ENCODE measurements at regions of chr1 and their contacts with region 1.

Region 1: GRCh38 chr1:35079003-35079930 is at the start of gene ZMYM1:
- DNase-seq: peak; percentile 95
- H3K4me3 Mint-ChIP-seq: peak within 1 kb of the TSS; percentile 96
- H3K27ac Mint-ChIP-seq: peak within 1 kb of the TSS; percentile 96
- H3K4me1 Mint-ChIP-seq: peaks cover 28% of the 10 kb centered on the region
- H3K27me3 Mint-ChIP-seq: peaks cover 5% of the 10 kb centered on the region
- total RNA-seq, gene ZMYM1: 2.8 and 5.7 TPM in 2 replicates

Region 2: DNA sequence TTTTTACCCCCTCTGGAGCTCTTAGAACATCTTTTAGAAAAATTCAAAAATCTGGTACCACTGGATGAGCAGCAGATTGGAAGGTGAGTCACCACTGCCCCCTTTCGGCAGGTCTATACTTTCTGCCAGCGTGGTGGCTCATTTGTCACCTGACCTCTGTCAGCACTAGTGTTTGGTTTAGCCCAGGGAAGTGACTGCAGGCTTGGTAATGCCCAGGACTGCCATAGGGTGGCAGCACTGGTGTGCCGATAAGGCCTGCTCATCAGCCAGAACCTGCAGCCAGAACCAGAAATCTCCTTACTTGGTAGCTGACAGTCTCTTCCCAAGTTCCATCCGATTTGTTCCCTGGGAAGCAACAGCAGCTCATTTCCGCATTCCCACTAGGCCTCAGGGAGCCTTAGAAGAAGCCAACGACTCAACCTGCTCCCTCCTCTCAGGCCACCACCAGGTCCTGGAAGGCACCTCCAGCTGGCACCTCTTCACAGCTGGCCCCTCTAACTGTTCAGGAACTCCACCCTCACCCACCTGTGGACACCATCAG is 226.5 kb before region 1 on chr1:
- intact Hi-C with region 1: loop called (anchors 10 kb)
- DNase-seq: peak; percentile 97
- H3K4me3 Mint-ChIP-seq: no peak overlapping the region
- H3K27ac Mint-ChIP-seq: peak overlapping the region; percentile 3
- H3K4me1 Mint-ChIP-seq: peaks cover 11% of the 10 kb centered on the region
- H3K27me3 Mint-ChIP-seq: no peaks in the 10 kb centered on the region

Region 3: DNA sequence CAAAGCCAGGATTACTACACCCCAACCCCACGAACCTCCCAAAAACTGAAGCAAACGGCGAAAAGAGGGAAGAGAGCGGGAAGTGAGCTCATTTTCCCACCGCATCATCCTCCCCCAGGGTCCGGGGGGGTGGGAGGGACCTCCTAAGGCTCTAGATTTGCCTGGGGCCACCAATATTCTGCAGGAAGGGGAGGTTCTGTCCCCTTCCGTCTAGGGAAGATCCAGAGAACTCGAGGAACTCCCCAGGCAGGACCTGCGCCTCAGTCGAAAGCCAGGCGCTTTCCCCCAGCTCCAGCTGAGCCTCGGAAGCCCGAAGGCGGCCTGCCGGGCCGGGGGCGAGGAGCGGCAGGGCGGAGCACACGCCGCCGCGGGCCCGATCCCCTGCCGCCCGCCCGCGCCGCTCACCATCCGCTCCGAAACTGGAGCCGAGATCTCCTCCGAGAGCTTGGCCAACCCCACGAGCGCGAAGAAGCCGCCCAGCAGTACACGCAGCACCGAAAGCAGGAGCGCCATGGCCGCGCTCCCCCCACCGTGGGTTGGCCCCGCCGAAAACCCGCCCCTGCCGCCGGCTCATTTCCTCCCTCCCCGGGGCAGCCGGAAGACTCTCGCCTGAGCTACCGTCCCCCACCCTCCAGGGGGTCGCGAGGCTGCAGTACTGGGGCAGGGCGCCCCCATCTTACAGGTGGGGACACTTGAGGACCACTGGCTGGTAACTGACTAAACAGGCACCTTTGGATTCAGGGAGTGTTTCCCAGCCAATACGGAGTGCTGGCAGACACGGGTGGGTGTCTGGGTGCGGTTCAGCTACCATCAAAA is 94.3 kb before region 1 on chr1 and contains the start of gene TMEM35B:
- intact Hi-C with region 1: loop called (anchors 5 kb)
- DNase-seq: peak; percentile 95
- H3K4me3 Mint-ChIP-seq: peak within 1 kb of the TSS; percentile 95
- H3K27ac Mint-ChIP-seq: peak within 1 kb of the TSS; percentile 92
- H3K4me1 Mint-ChIP-seq: peaks cover 32% of the 10 kb centered on the region
- H3K27me3 Mint-ChIP-seq: no peaks in the 10 kb centered on the region
- total RNA-seq, gene TMEM35B: 20.1 and 22.1 TPM in 2 replicates

Region 4: DNA sequence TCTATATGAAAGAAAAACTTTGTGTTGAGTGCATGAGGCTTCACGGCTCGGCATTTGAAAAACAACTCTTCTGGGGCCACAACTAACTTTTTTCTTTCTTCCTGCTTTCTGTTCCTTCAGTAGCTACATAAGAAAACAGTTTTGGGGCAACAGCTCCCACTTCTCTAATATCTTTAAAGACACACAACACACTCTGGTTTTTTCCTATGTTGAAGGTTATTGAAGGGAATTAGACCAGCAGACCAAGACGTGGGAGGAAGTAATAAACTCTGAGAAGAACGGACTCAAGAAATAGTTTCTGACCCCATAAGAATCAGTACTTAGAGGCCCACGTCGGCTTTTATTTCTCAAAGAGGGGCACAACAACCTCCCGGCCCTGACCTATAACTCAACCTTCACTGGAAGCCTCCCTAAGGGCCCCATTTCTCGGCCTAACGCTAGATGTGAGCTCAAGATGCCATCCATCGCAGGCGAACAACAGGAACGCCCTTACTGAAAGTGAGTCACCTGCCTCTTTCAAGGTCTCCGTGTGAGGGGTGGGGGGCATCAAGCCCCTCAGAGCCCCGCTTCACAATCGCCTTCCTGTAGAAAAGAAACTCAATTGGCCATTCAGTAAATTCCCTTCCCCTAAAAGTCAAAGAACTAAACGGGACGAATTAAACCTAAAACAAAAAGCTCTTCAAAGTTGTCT is 48.4 kb before region 1 on chr1:
- intact Hi-C with region 1: loop called (anchors 1 kb)
- DNase-seq: peak; percentile 82
- H3K4me3 Mint-ChIP-seq: peak overlapping the region; percentile 99
- H3K27ac Mint-ChIP-seq: peak overlapping the region; percentile 93
- H3K4me1 Mint-ChIP-seq: peaks cover 23% of the 10 kb centered on the region
- H3K27me3 Mint-ChIP-seq: peaks cover 2% of the 10 kb centered on the region

Region 5: DNA sequence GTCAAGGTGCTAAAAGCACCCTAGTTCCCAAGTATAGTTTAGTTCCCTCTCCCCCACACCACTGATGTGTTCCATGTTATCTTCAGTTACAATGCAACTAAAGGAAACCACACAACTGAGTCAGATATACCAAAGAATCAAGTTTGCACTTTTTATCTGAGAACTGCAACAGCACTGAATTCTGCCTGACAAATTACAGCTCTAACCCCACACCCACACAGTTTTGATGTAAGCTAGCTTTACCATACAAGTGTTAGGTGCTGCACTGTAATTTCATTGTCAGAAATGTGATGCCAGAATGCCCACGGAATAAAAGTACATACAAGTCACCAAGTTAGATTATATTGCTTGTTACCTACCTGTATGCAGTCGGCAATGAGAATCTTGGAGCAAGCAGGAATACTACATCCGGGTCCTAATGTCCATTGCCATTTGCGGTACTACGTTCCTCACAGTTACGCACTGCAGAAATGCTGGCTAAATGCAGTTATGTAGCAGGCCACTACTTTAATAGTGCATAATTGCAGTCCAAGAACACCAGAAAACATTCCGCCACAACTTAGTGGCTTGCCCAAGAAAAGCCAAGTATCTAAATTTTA is 101.6 kb after region 1 on chr1:
- intact Hi-C with region 1: loop called (anchors 1 kb)
- DNase-seq: no peak
- H3K4me3 Mint-ChIP-seq: peak overlapping the region; percentile 9
- H3K27ac Mint-ChIP-seq: peak overlapping the region; percentile 21
- H3K4me1 Mint-ChIP-seq: peaks cover 56% of the 10 kb centered on the region
- H3K27me3 Mint-ChIP-seq: no peaks in the 10 kb centered on the region

Region 6: GRCh38 chr1:35268282-35269200 is 189.3 kb after region 1 on chr1 and contains the start of gene ZMYM4:
- intact Hi-C with region 1: loop called (anchors 5 kb)
- DNase-seq: peak; percentile 97
- H3K4me3 Mint-ChIP-seq: peak within 1 kb of the TSS; percentile 95
- H3K27ac Mint-ChIP-seq: peak within 1 kb of the TSS; percentile 97
- H3K4me1 Mint-ChIP-seq: peaks cover 27% of the 10 kb centered on the region
- H3K27me3 Mint-ChIP-seq: peaks cover 6% of the 10 kb centered on the region
- total RNA-seq, gene ZMYM4: 25.6 and 31.0 TPM in 2 replicates

Measured in activated CD4-positive, alpha-beta T cell treated with anti-CD3 and anti-CD28 coated beads, Interleukin-2, amount 10 ng/mL, durations not matched to agents 24 days and 14 days (primary cell).